Activated B cell treated with CpG ODN at 0.5 μM for 24 hours (primary cell): ENCODE measurements at regions of chr19 and their contacts with region 1.

Region 1: GRCh38 chr19:16259385-16260159 is 61.9 kb downstream of the AP1M1 start:
- DNase-seq: peak; percentile 78
- ATAC-seq: peak; percentile 75
- H3K4me3 Mint-ChIP-seq: peak overlapping the region; percentile 65
- H3K27ac Mint-ChIP-seq: peak overlapping the region; percentile 93
- H3K4me1 Mint-ChIP-seq: peaks cover 90% of the 10 kb centered on the region
- H3K27me3 Mint-ChIP-seq: no peaks in the 10 kb centered on the region
- CTCF ChIP-seq: no peak

Region 2: GRCh38 chr19:16247353-16248182 is 12.0 kb before region 1 on chr19:
- CTCF ChIA-PET with region 1: interaction called, 23 read pairs
- POLR2A ChIA-PET with region 1: interaction called, 18 read pairs
- intact Hi-C with region 1: loop called (anchors 2 kb)
- DNase-seq: peak; percentile 85
- ATAC-seq: peak; percentile 88
- H3K4me3 Mint-ChIP-seq: peak overlapping the region; percentile 17
- H3K27ac Mint-ChIP-seq: peak overlapping the region; percentile 32
- H3K4me1 Mint-ChIP-seq: peaks cover 41% of the 10 kb centered on the region
- H3K27me3 Mint-ChIP-seq: no peaks in the 10 kb centered on the region
- CTCF ChIP-seq: peak; percentile 33

Region 3: DNA sequence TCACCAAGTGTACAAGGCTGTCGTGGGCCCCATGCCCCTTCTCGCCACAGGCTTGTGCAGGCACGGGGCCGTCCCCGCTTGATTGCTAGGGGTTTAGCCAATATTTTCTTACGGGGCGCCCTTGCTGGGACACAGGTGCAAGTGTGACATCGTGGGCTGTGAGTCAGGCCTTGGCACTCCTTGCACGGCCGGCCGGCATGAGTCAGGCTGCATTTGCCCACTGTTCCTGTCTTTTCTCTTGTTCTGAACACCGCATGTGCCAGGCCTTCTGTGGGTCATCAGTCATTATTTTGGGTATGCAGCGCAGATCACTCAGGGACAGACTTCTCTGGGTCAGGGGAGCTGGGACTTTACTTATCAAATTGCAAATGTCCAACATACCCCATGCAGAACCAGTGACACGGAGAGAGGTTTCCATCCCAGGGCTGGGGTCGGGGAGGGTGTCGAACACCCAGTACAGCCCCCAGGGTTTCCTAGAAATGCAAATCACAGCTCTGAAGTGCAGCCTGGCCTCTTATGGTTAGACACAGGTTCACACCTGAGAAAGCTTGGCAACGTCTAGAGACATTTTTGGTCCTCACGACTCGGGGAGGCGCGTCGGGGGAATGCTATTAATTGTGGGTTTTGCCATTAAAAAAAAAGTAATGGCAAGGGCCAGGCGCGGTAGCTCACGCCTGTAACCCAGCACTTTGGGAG is 42.6 kb after region 1 on chr19:
- CTCF ChIA-PET with region 1: no interaction called
- POLR2A ChIA-PET with region 1: interaction called, 31 read pairs
- intact Hi-C with region 1: loop called (anchors 1 kb)
- DNase-seq: peak; percentile 43
- ATAC-seq: peak; percentile 81
- H3K4me3 Mint-ChIP-seq: peak overlapping the region; percentile 50
- H3K27ac Mint-ChIP-seq: peak overlapping the region; percentile 88
- H3K4me1 Mint-ChIP-seq: peaks cover 22% of the 10 kb centered on the region
- H3K27me3 Mint-ChIP-seq: no peaks in the 10 kb centered on the region
- CTCF ChIP-seq: no peak

Region 4: DNA sequence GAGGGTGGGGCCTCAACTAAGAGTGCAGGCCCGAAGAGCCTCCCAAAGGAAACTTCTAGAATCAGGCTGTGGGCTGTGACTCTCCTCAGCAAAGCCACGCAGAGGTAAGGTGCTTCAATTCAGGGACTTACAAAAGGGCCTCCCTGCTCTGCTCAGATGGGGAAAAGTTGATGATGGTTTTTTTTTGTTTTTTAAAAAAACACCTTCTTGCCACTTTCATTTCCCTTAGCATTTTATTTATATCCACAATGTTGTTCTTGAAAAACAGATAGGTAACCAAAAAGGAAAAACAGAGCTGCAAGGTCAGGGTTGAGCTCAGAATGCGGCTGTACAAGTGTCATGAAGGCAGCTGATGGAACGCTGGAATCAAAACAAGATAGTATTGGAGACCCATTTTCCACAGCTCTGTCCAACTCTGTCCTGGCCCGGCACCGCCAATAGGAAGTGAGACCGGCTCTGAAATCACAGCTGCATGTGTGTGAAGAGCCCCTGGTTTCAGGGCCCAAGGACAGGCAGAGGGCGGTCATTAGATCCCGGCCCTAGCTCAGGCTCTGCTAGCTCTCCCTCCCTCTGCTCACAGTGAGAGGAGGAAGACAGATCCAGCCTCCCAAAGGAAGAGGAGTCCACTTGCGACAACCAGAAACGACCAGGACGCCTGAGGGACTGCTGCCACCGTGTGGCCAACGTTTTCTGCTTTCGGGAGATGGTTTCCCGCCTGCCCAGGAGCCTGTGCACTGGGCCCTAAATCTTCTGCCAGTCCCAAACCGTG is 123.4 kb after region 1 on chr19:
- CTCF ChIA-PET with region 1: interaction called, 14 read pairs
- POLR2A ChIA-PET with region 1: interaction called, 22 read pairs
- intact Hi-C with region 1: no loop called
- DNase-seq: peak; percentile 63
- ATAC-seq: peak; percentile 59
- H3K4me3 Mint-ChIP-seq: peak overlapping the region; percentile 57
- H3K27ac Mint-ChIP-seq: peak overlapping the region; percentile 94
- H3K4me1 Mint-ChIP-seq: peaks cover 82% of the 10 kb centered on the region
- H3K27me3 Mint-ChIP-seq: no peaks in the 10 kb centered on the region
- CTCF ChIP-seq: no peak